A549 (cell line): ENCODE measurements at regions of chr15 and their contacts with region 1.

Region 1: DNA sequence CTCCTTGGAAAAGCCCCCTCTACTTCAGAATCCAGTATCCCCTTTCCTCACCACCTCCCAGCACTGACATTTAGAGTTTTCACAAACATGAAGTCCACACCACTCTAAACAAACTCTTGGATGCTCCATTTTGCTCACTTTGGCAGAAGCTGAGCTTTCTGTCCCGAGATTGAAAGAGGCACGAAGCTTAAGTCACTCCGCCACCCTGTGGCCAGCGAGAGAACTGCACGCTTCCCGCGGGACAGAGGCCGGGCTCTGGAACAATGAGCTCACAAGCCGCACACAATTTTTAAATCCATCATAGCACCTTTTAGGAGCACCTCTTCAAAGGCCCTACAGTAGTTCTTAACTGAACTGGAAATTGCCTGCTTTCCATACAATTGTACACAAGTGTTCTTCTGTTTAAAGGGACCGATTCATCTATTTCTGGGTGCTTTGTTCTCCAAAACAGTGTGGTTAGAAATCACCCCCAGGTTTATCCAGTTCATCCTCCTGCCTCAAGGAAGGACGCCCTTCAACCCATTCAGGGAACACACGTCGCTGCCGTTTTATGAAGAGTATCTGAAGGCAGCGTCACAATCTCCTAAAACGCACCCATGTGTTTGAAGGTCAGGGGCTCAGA is 226.1 kb downstream of the VPS13C start:
- DNase-seq: peak; percentile 67 to 82
- ATAC-seq: peak; percentile 72 to 88
- H3K4me3 ChIP-seq: no peak overlapping the region
- H3K27ac ChIP-seq: no peak overlapping the region
- H3K4me1 ChIP-seq: peaks cover 7% of the 10 kb centered on the region; the same call in 1 of the 3 replicates
- CTCF ChIP-seq: peak; percentile 89
- EP300 ChIP-seq: no peak
- POLR2A ChIP-seq: no peak
- RAD21 ChIP-seq: peak; percentile 84 to 88

Region 2: DNA sequence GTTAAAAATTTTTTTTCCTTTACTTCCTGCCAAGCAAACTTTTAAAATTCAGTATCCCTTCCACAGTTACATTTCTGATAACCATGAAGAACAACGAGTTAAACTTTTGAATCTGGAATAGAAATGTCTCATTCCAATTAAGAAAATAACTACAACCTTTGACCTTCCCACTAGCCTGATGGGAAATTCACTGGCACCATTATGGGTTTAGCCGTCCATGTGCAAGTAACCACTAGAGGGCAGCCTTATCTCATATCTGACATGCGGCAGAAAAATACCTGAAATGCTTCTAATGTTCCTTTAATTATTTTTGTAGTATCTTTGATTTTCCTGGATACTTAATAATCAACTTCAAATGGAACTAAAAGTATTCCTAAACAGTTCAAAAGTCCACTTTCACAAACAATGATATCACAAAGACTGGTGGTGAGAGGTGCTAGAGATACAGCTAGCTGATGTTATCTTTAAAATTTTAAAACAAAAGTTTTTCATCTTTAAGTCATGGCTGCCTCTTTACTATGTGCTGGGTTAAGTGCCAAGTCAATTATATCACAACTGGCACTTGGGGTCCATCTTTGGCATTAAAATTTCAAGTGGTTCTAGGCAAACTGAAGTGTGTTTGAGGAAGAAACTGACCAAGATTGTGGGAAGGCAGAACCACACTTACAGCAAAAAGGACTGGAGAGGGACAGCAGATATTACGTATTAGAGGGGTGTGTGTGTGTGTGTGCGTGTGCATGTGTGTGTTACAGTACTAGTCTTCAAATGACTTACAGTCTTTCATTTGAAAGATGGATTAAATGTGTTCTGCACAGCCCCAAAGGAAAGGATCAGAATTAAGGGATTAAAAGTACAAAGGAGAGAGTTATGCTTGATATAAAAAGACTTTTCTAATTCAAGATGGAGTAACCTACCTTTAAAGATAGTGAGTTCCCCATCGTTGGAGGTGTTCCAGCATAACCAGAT is 1248.2 kb before region 1 on chr15:
- CTCF ChIA-PET with region 1: interaction called, 61 read pairs
- POLR2A ChIA-PET with region 1: no interaction called
- DNase-seq: peak; percentile 75 to 79
- ATAC-seq: peak; percentile 54 to 85; a peak in 4 of 6 replicates
- H3K4me3 ChIP-seq: no peak overlapping the region
- H3K27ac ChIP-seq: no peak overlapping the region
- H3K4me1 ChIP-seq: peaks cover 4% of the 10 kb centered on the region; the same call in 1 of the 3 replicates
- CTCF ChIP-seq: peak; percentile 99
- EP300 ChIP-seq: no peak
- POLR2A ChIP-seq: no peak
- RAD21 ChIP-seq: peak; percentile 96 to 97

Region 3: GRCh38 chr15:61169904-61170695 is 664.1 kb before region 1 on chr15:
- CTCF ChIA-PET with region 1: interaction called, 27 read pairs
- POLR2A ChIA-PET with region 1: no interaction called
- DNase-seq: no peak
- ATAC-seq: no peak
- H3K4me3 ChIP-seq: no peak overlapping the region
- H3K27ac ChIP-seq: no peak overlapping the region
- H3K4me1 ChIP-seq: no peaks in the 10 kb centered on the region
- CTCF ChIP-seq: no peak
- EP300 ChIP-seq: no peak
- POLR2A ChIP-seq: no peak
- RAD21 ChIP-seq: no peak

Region 4: DNA sequence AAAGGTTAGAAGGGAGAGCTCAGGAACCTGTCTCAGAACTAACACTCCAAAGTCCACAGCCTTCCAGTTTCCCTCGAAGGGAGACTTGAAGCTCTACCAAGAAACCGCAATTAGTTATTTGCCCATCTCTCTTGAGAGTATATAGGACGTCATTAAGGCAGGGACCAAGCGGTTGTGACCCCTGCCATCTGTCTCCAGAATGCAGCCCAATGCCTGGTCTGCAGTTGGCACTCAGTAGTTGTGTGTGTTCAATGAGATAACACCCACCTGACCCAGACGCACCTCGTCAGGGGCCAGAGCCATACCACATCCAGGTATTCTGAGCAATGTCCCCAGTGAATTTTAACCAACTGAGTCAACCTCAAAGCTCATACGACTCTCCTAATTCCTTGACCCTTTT is 25.0 kb before region 1 on chr15:
- CTCF ChIA-PET with region 1: interaction called, 33 read pairs
- POLR2A ChIA-PET with region 1: no interaction called
- DNase-seq: no peak
- ATAC-seq: no peak
- H3K4me3 ChIP-seq: no peak overlapping the region
- H3K27ac ChIP-seq: no peak overlapping the region
- H3K4me1 ChIP-seq: no peaks in the 10 kb centered on the region
- CTCF ChIP-seq: no peak
- EP300 ChIP-seq: no peak
- POLR2A ChIP-seq: no peak
- RAD21 ChIP-seq: no peak

Region 5: GRCh38 chr15:61853195-61853594 is 19.0 kb after region 1 on chr15:
- CTCF ChIA-PET with region 1: interaction called, 15 read pairs
- POLR2A ChIA-PET with region 1: no interaction called
- DNase-seq: no peak
- ATAC-seq: no peak
- H3K4me3 ChIP-seq: no peak overlapping the region
- H3K27ac ChIP-seq: no peak overlapping the region
- H3K4me1 ChIP-seq: no peaks in the 10 kb centered on the region
- CTCF ChIP-seq: no peak
- EP300 ChIP-seq: no peak
- POLR2A ChIP-seq: no peak
- RAD21 ChIP-seq: no peak